ENCODE measurements at regions of chr12 and their contacts with region 1.

Region 1: GRCh38 chr12:121550974-121551634 is 29.7 kb downstream of the KDM2B start:
- DNase-seq: no peak
- ATAC-seq: no peak
- H3K4me3 ChIP-seq: no peak overlapping the region
- H3K4me3 Mint-ChIP-seq: no peak overlapping the region
- H3K27ac ChIP-seq: no peak overlapping the region
- H3K27ac Mint-ChIP-seq: no peak overlapping the region
- H3K4me1 ChIP-seq: peaks cover 0 to 3% of the 10 kb centered on the region in 2 donors
- H3K4me1 Mint-ChIP-seq: peaks cover 2% of the 10 kb centered on the region
- H3K27me3 ChIP-seq: no peaks in the 10 kb centered on the region
- H3K27me3 Mint-ChIP-seq: no peaks in the 10 kb centered on the region
- CTCF ChIP-seq: no peak

Region 2: DNA sequence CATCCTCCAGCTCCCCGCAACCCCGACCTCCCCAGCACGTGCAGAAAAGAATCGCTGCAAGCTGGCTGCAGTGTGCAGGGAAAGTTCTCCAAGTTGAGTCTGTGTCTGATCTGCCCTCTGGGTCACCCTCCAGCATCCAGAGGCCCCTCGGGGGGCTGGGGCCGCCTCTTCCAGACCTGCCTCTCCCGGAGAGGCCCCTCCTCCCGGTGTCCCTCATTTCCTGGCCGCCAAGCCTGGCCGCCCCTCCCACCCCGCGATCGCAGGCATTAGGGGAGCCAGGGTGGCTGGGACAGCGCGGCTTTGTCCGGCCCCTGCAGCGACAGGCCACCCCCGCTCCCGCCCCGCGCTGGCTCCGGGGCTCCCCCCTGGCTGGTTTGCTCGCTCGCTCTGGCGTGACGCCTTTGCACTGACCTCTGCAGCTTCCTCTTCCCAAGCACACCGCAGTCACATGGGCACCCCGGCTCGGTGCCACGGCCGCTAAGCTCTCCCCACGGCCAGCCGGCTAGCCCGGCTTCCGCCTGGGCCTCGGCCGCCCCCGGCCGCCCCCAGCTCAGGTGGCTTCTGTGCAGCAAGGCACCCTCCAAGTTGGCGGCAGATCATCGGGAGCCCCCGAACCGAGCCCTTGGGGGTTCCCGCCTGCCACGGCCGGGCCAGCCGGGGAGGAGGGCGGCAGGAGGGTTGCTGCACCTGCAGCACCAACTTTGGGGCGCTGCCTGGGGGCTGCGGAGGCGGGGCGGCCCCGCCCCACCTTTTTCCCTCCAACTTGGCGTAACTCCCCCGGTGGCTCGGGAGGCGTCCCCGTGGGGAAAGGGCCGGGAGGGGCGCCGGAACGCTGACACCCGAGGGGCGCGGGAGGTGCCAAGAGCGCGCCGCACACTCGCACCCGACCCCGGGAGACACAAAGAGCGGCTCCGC is 13.9 kb before region 1 on chr12:
- CTCF ChIA-PET with region 1: interaction called, 27 read pairs
- POLR2A ChIA-PET with region 1: interaction called, 13 read pairs
- intact Hi-C with region 1: no loop called
- DNase-seq: peak; percentile 92
- ATAC-seq: peak; percentile 49
- H3K4me3 ChIP-seq: peak overlapping the region; percentile 8 to 85 (median 66)
- H3K4me3 Mint-ChIP-seq: peak overlapping the region; percentile 94
- H3K27ac ChIP-seq: peak overlapping the region; percentile 92 to 97
- H3K27ac Mint-ChIP-seq: peak overlapping the region; percentile 93
- H3K4me1 ChIP-seq: peaks cover 50 to 56% of the 10 kb centered on the region in 2 donors
- H3K4me1 Mint-ChIP-seq: peaks cover 53% of the 10 kb centered on the region
- H3K27me3 ChIP-seq: no peaks in the 10 kb centered on the region
- H3K27me3 Mint-ChIP-seq: no peaks in the 10 kb centered on the region
- CTCF ChIP-seq: no peak

Region 3: DNA sequence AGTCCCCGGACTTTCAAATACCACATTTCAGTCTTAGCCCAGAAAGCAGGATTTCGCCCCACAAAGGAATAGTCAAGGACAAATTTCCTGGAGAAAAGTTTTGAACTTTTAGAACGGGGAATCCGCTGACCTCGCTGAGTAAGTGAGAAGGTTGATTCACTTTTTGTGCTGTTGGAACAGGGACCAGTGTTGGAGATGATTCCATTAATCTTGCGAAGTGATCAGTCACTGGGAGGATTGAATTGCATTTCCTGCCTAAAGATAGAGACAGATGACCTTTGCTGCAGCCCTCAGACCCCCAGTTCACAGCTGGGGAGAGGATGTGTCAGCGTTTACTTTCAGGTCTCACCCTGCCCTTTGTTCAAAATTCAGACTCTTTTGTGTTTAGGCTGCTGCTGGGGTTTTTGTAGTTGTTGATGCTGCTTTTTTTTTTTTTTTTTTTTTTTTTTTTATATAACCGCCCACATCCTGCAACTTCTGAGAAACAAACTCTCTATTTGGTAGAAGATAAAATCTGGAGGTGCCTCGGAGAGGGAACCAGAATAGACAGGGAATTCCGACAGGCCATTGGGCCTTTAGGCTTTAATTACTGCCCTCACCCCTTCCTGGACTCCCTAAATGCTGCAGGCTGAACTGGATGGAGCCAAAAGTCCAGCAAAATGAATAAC is 39.5 kb after region 1 on chr12:
- CTCF ChIA-PET with region 1: interaction called, 32 read pairs
- POLR2A ChIA-PET with region 1: interaction called, 6 read pairs
- intact Hi-C with region 1: no loop called
- DNase-seq: peak; percentile 82
- ATAC-seq: peak; percentile 67
- H3K4me3 ChIP-seq: peak overlapping the region; percentile 15 to 61 (median 47)
- H3K4me3 Mint-ChIP-seq: peak overlapping the region; percentile 92
- H3K27ac ChIP-seq: peak overlapping the region; percentile 96 to 99
- H3K27ac Mint-ChIP-seq: peak overlapping the region; percentile 100
- H3K4me1 ChIP-seq: peaks cover 26 to 37% of the 10 kb centered on the region in 2 donors
- H3K4me1 Mint-ChIP-seq: peaks cover 34% of the 10 kb centered on the region
- H3K27me3 ChIP-seq: no peaks in the 10 kb centered on the region
- H3K27me3 Mint-ChIP-seq: no peaks in the 10 kb centered on the region
- CTCF ChIP-seq: no peak

Region 4: DNA sequence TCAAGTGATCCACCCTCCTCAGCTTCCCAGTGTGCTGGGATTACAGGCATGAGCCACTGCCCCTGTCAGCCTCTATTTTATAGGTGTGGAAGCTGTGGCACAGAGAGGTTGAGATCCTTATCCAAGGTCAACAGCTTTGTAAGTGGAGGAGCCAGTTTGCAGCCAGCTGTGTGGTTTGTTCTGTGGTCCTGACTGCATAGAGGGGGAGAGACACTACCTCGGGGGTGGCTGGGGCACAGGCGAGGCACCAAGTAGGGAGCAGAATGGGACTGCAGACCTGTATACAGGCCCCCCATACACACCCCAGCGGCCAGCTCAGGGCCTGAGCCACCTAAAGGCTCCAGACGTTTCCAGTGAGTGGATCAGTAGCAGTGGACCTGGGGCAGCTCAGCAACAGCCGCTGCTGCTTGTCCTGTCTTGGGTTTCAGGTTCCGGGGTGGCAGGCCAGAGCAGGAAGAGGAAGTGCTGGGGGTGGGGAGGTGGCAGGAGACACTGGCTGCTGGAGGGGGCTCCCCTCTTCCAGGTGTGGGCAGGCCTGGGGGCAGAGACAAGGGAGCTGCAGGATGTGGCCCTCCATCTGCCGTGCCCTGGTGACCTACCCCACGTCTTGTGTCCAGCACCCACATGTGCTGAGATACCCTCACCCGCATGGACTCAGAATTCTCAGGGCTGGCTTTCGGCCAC is 86.3 kb after region 1 on chr12:
- CTCF ChIA-PET with region 1: interaction called, 213 read pairs
- POLR2A ChIA-PET with region 1: interaction called, 5 read pairs
- intact Hi-C with region 1: no loop called
- DNase-seq: peak; percentile 79
- ATAC-seq: peak; percentile 90
- H3K4me3 ChIP-seq: peak overlapping the region in 4 of 5 experiments; percentile 19 to 46 (median 37)
- H3K4me3 Mint-ChIP-seq: peak overlapping the region; percentile 67
- H3K27ac ChIP-seq: peak overlapping the region; percentile 86 to 89
- H3K27ac Mint-ChIP-seq: peak overlapping the region; percentile 92
- H3K4me1 ChIP-seq: peaks cover 29 to 40% of the 10 kb centered on the region in 2 donors
- H3K4me1 Mint-ChIP-seq: peaks cover 40% of the 10 kb centered on the region
- H3K27me3 ChIP-seq: no peaks in the 10 kb centered on the region
- H3K27me3 Mint-ChIP-seq: no peaks in the 10 kb centered on the region
- CTCF ChIP-seq: no peak

Region 5: GRCh38 chr12:121668750-121669520 is 117.8 kb after region 1 on chr12:
- CTCF ChIA-PET with region 1: interaction called, 171 read pairs
- POLR2A ChIA-PET with region 1: interaction called, 10 read pairs
- intact Hi-C with region 1: loop called (anchors 1 kb)
- DNase-seq: peak; percentile 67
- ATAC-seq: no peak
- H3K4me3 ChIP-seq: no peak overlapping the region
- H3K4me3 Mint-ChIP-seq: no peak overlapping the region
- H3K27ac ChIP-seq: no peak overlapping the region
- H3K27ac Mint-ChIP-seq: peak overlapping the region; percentile 61
- H3K4me1 ChIP-seq: peaks cover 30 to 52% of the 10 kb centered on the region in 2 donors
- H3K4me1 Mint-ChIP-seq: peaks cover 42% of the 10 kb centered on the region
- H3K27me3 ChIP-seq: no peaks in the 10 kb centered on the region
- H3K27me3 Mint-ChIP-seq: no peaks in the 10 kb centered on the region
- CTCF ChIP-seq: peak; percentile 78